ENCODE measurements at regions of chr11 and their contacts with region 1.

Region 1: GRCh38 chr11:123478352-123478987 is 48.4 kb downstream of the GRAMD1B start:
- DNase-seq: peak in 1 of 2 experiments; percentile 62
- H3K4me3 ChIP-seq: no peak overlapping the region
- H3K27ac ChIP-seq: no peak overlapping the region
- H3K4me1 ChIP-seq: peaks cover 2 to 15% (median 8%) of the 10 kb centered on the region in 4 experiments; a peak in 6 of 7 replicates
- H3K27me3 ChIP-seq: no peaks in the 10 kb centered on the region; a peak in 1 of 7 replicates
- CTCF ChIP-seq: peak; percentile 48 to 97 (median 76)
- EP300 ChIP-seq: no peak
- POLR2A ChIP-seq: no peak
- RAD21 ChIP-seq: peak; percentile 89 to 96

Region 2: DNA sequence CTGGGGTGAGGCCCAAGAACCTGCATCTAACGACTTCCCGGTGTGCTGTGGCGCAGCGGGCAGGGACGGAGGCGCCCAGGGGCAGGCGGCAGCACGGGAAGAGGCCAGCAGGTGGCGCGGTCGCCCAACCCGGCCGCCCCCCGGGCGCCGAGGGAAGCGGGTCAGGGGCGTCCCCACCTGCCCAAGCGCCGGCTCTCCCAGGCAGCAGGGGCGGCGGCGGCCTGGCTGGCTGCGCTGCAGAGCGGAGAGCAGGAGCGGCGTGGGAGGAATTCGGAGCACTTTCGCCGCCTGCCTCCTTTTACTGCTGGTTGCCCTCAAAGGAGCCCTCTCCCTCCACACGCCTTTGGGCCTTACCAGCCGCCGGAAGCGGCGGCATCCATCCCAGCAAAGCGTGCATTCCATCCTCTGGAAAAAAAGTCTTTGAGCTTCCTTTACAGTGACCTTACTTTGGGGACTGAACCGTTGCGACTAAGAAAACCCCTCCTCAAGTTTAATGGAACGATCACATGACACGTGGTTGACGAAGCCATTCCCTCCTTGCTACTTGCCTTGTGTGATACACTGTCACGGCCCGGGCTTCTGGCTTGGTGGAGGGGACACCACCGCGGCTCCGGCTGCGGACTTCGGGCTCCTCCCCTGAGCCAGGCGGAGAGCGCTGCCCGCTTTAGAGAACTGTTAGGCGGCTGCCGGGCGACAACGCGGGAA is 176.6 kb before region 1 on chr11:
- CTCF ChIA-PET with region 1: interaction called, 28 read pairs
- POLR2A ChIA-PET with region 1: interaction called, 5 read pairs
- DNase-seq: peak; percentile 46 to 93
- H3K4me3 ChIP-seq: peak overlapping the region; percentile 42 to 80 (median 61)
- H3K27ac ChIP-seq: no peak overlapping the region
- H3K4me1 ChIP-seq: peaks cover 0 to 11% (median 6%) of the 10 kb centered on the region in 4 experiments; a peak in 6 of 7 replicates
- H3K27me3 ChIP-seq: peaks cover 2 to 22% (median 18%) of the 10 kb centered on the region in 4 experiments
- CTCF ChIP-seq: peak; percentile 81 to 95 (median 91)
- EP300 ChIP-seq: no peak
- POLR2A ChIP-seq: no peak
- RAD21 ChIP-seq: peak; percentile 83 to 92

Region 3: DNA sequence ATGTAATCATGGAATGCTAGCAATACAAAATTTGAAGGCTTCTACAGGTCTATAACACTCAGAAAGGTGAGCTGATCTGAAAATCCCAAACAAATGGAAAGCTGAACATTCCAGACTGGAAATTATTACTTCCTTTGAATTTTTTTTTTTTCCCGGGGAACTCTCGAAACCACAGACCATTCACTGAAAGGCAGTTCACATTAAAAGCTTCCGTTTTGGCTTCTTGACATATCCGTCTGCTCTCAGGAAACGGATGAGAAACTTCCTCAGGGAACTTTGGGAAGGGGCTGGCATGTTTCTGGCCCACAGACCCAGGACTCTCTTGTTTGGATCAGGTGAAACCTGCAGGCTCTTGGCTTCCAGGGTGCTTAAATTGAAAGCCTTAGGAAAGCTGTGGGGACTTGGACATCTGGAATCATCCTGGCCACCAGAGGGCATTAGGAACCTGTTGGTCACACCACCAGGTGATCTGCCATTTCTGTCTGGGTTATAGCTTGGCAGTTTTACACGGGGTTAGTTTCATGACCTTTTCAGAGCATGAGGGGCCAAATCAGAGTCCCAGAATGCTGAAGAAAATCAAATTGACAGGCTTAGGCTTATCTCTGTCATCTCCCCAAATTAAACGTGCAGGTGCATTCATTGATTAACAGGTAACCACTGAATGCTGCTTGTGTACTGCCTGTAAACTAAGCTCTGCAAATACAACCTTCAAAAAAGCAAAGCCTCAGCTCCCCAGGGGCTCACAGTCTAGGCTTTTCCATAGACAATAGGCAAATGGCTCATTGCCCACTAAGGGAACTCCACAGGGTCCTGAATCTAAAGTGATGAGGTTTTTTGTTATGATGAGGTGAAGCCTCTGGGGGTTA is 71.1 kb before region 1 on chr11:
- CTCF ChIA-PET with region 1: interaction called, 74 read pairs
- POLR2A ChIA-PET with region 1: interaction called, 4 read pairs
- DNase-seq: peak; percentile 56 to 75
- H3K4me3 ChIP-seq: no peak overlapping the region; a peak in 1 of 8 replicates
- H3K27ac ChIP-seq: no peak overlapping the region
- H3K4me1 ChIP-seq: peaks cover 0 to 21% (median 7%) of the 10 kb centered on the region in 4 experiments; a peak in 6 of 7 replicates
- H3K27me3 ChIP-seq: peaks cover 0 to 6% (median under 1%) of the 10 kb centered on the region in 4 experiments; a peak in 4 of 7 replicates
- CTCF ChIP-seq: peak; percentile 59 to 94 (median 86)
- EP300 ChIP-seq: 0 out of 3 replicates have a peak, but pooled peaks of 1 of the 2 experiments have one; percentile 3
- POLR2A ChIP-seq: no peak
- RAD21 ChIP-seq: peak; percentile 84 to 94

Region 4: GRCh38 chr11:123461164-123461563 is 17.3 kb before region 1 on chr11:
- CTCF ChIA-PET with region 1: interaction called, 14 read pairs
- POLR2A ChIA-PET with region 1: no interaction called
- DNase-seq: no peak
- H3K4me3 ChIP-seq: no peak overlapping the region
- H3K27ac ChIP-seq: no peak overlapping the region
- H3K4me1 ChIP-seq: no peaks in the 10 kb centered on the region
- H3K27me3 ChIP-seq: no peaks in the 10 kb centered on the region
- CTCF ChIP-seq: no peak
- EP300 ChIP-seq: no peak
- POLR2A ChIP-seq: no peak
- RAD21 ChIP-seq: no peak

Region 5: DNA sequence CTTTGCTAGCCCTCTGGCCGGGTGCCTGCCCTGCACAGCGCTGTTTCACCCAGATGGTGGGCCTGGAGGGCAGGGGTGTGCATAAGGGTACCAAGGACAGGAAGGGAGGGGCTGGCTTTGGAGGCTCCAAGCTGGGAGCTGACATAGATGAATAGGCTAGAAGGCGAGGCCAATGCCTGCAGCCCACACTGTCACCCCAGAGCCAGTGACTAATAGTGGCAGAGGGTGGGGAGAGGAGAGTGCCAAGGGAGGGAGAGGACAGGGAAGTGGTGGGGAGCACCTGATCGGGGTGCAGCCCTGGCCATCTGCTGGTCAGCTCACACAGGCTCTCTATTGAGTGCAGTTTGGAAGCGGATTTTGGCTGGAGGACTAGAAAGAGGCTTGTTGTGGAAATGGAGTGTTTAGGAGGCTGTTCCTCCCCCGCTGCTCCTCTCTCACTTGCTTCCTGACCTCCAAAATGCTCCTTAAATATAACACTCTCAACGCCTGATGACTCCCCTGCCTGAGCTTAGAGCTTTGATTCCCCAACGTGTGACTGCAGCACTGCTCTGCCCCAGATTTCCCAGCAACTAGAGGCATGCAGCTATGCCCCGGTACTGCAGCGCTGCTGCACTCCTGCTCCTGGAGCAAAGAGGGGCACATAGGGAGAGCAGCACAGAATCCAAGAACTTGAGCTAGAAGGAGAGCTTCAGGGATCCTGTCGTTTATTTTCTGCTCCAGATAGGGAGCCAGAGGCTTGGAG is 40.8 kb after region 1 on chr11:
- CTCF ChIA-PET with region 1: interaction called, 10 read pairs
- POLR2A ChIA-PET with region 1: no interaction called
- DNase-seq: peak in 1 of 2 experiments; percentile 52
- H3K4me3 ChIP-seq: no peak overlapping the region
- H3K27ac ChIP-seq: no peak overlapping the region
- H3K4me1 ChIP-seq: peaks cover 12 to 22% (median 16%) of the 10 kb centered on the region in 4 experiments
- H3K27me3 ChIP-seq: no peaks in the 10 kb centered on the region
- CTCF ChIP-seq: no peak
- EP300 ChIP-seq: no peak
- POLR2A ChIP-seq: no peak
- RAD21 ChIP-seq: no peak

Region 6: GRCh38 chr11:123822032-123822431 is 343.6 kb after region 1 on chr11:
- CTCF ChIA-PET with region 1: no interaction called
- POLR2A ChIA-PET with region 1: no interaction called
- DNase-seq: no peak
- H3K4me3 ChIP-seq: no peak overlapping the region
- H3K27ac ChIP-seq: no peak overlapping the region
- H3K4me1 ChIP-seq: no peaks in the 10 kb centered on the region
- H3K27me3 ChIP-seq: no peaks in the 10 kb centered on the region
- CTCF ChIP-seq: no peak
- EP300 ChIP-seq: no peak
- POLR2A ChIP-seq: no peak
- RAD21 ChIP-seq: no peak

Measured in H1 (cell line).